CD8-positive, alpha-beta T cell (primary cell): ENCODE measurements at regions of chr5 and their contacts with region 1.

Region 1: GRCh38 chr5:179732417-179732917 is at the start of gene MAML1:
- DNase-seq: peak; percentile 98 to 100 (median 99)
- ATAC-seq: peak; percentile 93
- H3K4me3 ChIP-seq: peak within 1 kb of the TSS; percentile 52 to 76
- H3K4me3 Mint-ChIP-seq: peak within 1 kb of the TSS; percentile 95
- H3K27ac ChIP-seq: peak within 1 kb of the TSS; percentile 62 to 91
- H3K27ac Mint-ChIP-seq: peak within 1 kb of the TSS; percentile 97
- H3K4me1 ChIP-seq: peaks cover 28% of the 10 kb centered on the region
- H3K4me1 Mint-ChIP-seq: peaks cover 40% of the 10 kb centered on the region
- H3K27me3 ChIP-seq: no peaks in the 10 kb centered on the region
- H3K27me3 Mint-ChIP-seq: no peaks in the 10 kb centered on the region
- CTCF ChIP-seq: no peak
- total RNA-seq, gene MAML1: 23.4 to 26.9 TPM

Region 2: DNA sequence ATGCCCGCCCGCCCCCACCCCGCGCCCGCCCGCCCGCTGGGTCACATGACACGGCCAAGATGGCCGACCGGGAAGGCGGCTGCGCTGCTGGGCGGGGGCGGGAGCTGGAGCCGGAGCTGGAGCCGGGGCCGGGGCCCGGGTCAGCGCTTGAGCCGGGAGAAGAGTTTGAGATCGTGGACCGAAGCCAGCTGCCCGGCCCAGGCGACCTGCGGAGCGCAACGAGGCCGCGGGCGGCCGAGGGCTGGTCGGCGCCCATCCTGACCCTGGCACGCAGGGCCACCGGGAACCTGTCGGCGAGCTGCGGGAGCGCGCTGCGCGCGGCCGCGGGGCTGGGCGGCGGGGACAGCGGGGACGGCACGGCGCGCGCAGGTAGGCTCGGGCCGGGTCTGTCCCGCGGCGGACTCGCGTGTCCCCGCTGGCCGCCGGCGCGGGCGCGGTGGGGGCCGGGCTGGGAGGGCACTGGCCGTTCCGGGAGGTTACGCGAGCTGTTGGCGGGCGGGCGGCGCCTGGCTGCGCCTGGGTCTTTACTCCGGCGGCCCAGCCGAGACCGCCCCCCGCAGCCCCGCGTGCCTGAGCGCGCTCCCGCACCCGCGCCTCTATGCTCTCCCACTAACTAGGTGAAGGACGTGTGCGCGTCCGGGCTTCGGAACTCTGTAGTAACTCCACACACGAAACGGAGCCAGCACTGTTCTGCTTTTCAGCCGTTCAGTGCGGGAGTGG is 181.8 kb before region 1 on chr5 and contains the start of gene RUFY1:
- CTCF ChIA-PET with region 1: no interaction called
- POLR2A ChIA-PET with region 1: no interaction called
- intact Hi-C with region 1: loop called in 1 of 2 experiments (anchors 2 kb)
- DNase-seq: peak; percentile 69 to 91 (median 82)
- ATAC-seq: peak; percentile 71
- H3K4me3 ChIP-seq: peak within 1 kb of the TSS; percentile 89 to 98
- H3K4me3 Mint-ChIP-seq: peak within 1 kb of the TSS; percentile 97
- H3K27ac ChIP-seq: peak within 1 kb of the TSS; percentile 76 to 80
- H3K27ac Mint-ChIP-seq: peak within 1 kb of the TSS; percentile 97
- H3K4me1 ChIP-seq: peaks cover 26% of the 10 kb centered on the region
- H3K4me1 Mint-ChIP-seq: peaks cover 42% of the 10 kb centered on the region
- H3K27me3 ChIP-seq: no peaks in the 10 kb centered on the region
- H3K27me3 Mint-ChIP-seq: no peaks in the 10 kb centered on the region
- CTCF ChIP-seq: no peak
- total RNA-seq, gene RUFY1: 19.6 to 19.8 TPM

Region 3: DNA sequence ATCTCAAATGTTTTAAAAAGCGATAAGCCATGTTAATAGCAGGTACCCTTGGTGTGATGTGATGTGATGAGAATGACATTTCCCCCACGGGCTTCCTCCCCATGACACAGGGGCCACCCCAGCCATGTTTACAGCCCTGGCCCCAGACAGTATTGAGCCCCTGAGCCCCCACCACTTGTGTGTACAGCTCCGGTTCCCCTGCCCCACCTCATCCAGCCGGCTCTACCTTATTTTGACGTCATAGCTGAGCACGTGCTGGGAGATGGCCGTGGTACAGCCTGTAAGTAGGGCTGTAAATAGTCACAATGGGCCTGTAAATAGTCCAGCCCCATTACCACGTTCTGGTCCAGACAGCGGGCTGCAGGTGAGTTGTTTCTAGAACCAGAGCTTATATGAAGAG is 84.1 kb before region 1 on chr5:
- CTCF ChIA-PET with region 1: no interaction called
- POLR2A ChIA-PET with region 1: no interaction called
- intact Hi-C with region 1: no loop called
- DNase-seq: no peak
- ATAC-seq: no peak
- H3K4me3 ChIP-seq: no peak overlapping the region
- H3K4me3 Mint-ChIP-seq: no peak overlapping the region
- H3K27ac ChIP-seq: no peak overlapping the region
- H3K27ac Mint-ChIP-seq: no peak overlapping the region
- H3K4me1 ChIP-seq: no peaks in the 10 kb centered on the region
- H3K4me1 Mint-ChIP-seq: no peaks in the 10 kb centered on the region
- H3K27me3 ChIP-seq: no peaks in the 10 kb centered on the region
- H3K27me3 Mint-ChIP-seq: no peaks in the 10 kb centered on the region
- CTCF ChIP-seq: no peak

Region 4: DNA sequence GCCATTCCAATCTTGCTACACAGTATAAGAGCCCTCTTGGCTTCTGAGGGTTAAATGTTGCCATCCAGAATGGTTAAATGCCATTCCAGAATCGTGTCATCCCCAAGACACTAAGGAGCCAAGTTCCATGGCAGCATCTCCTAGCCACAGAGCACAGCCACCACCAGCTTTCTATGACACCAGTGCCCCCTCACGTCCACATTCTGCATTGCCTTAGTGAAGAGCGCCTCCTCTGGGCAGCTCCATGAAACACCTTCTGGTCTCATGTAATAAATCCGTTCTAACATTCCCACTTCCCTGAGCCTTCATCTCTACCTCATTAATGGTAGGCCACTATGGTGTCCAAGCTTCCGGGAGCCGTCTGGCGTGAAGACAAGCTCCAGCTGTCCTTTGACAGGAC is 64.1 kb before region 1 on chr5:
- CTCF ChIA-PET with region 1: no interaction called
- POLR2A ChIA-PET with region 1: no interaction called
- intact Hi-C with region 1: loop called in 1 of 2 experiments (anchors 5 kb)
- DNase-seq: peak in 8 of 9 experiments; percentile 8 to 71 (median 46)
- ATAC-seq: peak; percentile 80
- H3K4me3 ChIP-seq: no peak overlapping the region
- H3K4me3 Mint-ChIP-seq: no peak overlapping the region
- H3K27ac ChIP-seq: no peak overlapping the region
- H3K27ac Mint-ChIP-seq: no peak overlapping the region
- H3K4me1 ChIP-seq: no peaks in the 10 kb centered on the region
- H3K4me1 Mint-ChIP-seq: no peaks in the 10 kb centered on the region
- H3K27me3 ChIP-seq: no peaks in the 10 kb centered on the region
- H3K27me3 Mint-ChIP-seq: no peaks in the 10 kb centered on the region
- CTCF ChIP-seq: peak; percentile 49

Region 5: DNA sequence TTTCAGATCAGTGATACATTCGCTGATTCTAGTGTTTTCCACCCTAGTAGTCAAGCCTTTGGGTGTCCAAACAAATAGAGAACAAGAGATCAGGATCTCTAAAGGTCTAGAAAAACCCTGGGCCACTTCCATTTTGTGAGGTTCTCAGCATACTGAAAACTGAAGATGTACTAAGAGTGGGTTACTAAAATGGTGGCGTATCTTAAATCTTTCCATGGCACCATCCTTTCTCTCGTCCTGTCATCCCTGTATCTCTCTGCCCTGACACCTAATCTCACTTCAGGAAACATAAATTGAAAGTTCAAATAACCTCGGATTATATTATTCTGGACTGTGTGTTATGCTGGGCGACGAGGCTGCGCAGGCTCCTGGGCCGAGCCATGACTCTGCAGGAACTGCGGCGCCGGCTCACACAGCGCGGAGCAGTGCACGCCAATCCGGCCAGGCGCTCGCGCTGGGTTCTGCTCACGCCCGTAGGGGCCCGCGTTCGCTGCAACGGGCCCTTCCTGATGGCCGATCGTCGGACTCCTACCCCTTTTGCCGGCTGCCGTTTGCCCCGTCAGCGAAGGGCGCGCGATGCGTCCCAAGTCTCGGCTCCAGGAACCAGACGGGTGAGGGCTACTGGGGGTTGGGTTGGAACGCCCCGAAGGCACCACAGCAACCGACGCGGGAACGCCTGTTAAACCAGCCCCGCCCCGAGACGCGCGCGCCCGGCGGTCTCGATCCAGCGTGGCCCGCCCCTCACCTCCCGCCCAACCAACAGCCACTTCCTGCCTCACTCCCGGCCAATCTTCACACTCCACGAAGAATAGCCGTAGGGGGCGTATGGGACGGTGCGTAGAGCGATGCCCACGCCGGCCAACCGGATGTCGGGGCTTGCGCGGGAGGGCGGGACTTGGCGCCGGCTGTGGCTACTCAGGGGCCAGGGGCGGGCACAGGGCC is 34.2 kb before region 1 on chr5:
- CTCF ChIA-PET with region 1: no interaction called
- POLR2A ChIA-PET with region 1: interaction called, 12 read pairs
- intact Hi-C with region 1: loop called (anchors 1 kb)
- DNase-seq: peak; percentile 97 to 100 (median 98)
- ATAC-seq: peak; percentile 87
- H3K4me3 ChIP-seq: peak overlapping the region; percentile 84 to 89
- H3K4me3 Mint-ChIP-seq: peak overlapping the region; percentile 99
- H3K27ac ChIP-seq: peak overlapping the region; percentile 92 to 94
- H3K27ac Mint-ChIP-seq: peak overlapping the region; percentile 100
- H3K4me1 ChIP-seq: peaks cover 32% of the 10 kb centered on the region
- H3K4me1 Mint-ChIP-seq: peaks cover 40% of the 10 kb centered on the region
- H3K27me3 ChIP-seq: no peaks in the 10 kb centered on the region
- H3K27me3 Mint-ChIP-seq: no peaks in the 10 kb centered on the region
- CTCF ChIP-seq: no peak

Region 6: DNA sequence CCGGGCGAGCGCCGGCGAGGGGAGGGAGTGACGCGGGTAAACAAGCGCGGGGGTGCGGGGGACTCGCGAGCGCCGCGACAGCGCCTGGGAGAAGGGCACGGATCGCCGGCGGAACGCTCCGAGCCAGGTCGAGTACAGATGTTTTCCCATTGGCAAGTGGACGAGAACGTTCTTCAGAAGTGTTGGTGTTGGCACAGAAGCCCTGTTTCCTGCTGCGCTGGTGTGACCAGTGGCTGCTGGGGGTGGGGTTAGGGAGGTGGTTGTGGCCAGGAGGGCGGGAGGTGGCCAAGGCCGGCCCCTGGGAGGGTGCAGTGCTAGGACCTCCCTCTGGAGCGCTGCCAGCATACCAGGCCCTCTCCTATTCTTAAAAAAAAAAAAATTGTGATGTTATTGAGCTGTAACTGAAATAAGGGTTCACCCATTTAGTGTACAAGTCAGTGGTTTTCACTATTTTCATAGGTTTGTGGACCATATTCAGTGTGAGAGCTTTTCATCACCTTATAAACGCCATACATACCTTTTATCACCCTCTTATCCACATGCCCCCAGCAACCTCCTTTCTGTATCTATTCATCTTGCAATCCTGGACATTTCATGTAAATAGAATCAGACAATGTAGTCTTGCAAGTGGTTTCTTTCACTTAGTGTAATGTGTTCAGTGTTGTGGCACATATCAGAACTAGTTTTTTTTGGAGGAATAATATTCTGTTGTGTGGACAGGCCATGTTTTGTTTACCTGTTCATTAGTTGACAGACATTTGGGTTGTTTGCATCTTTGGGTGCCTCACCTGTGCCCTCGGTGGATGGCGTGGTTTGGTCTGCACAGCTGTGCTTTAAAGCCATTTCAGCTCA is 89.3 kb after region 1 on chr5:
- CTCF ChIA-PET with region 1: no interaction called
- POLR2A ChIA-PET with region 1: interaction called, 5 read pairs
- intact Hi-C with region 1: loop called (anchors 1 kb)
- DNase-seq: peak; percentile 79 to 94 (median 88)
- ATAC-seq: peak; percentile 63
- H3K4me3 ChIP-seq: peak overlapping the region; percentile 81 to 94
- H3K4me3 Mint-ChIP-seq: peak overlapping the region; percentile 95
- H3K27ac ChIP-seq: peak overlapping the region; percentile 92 to 99
- H3K27ac Mint-ChIP-seq: peak overlapping the region; percentile 96
- H3K4me1 ChIP-seq: peaks cover 47% of the 10 kb centered on the region
- H3K4me1 Mint-ChIP-seq: peaks cover 59% of the 10 kb centered on the region
- H3K27me3 ChIP-seq: peaks cover 0 to 2% of the 10 kb centered on the region in 2 experiments
- H3K27me3 Mint-ChIP-seq: no peaks in the 10 kb centered on the region
- CTCF ChIP-seq: no peak